Spleen (tissue), 13 donors: ENCODE measurements at regions of chr12 and their contacts with region 1.

Region 1: GRCh38 chr12:118979763-118980406 is 1.5 kb upstream of the SRRM4 start:
- DNase-seq: no peak
- H3K4me3 ChIP-seq: no peak overlapping the region
- H3K27ac ChIP-seq: no peak overlapping the region
- H3K4me1 ChIP-seq: peaks cover 0 to 13% (median 1%) of the 10 kb centered on the region in 6 donors
- H3K27me3 ChIP-seq: peaks cover 3 to 77% (median 26%) of the 10 kb centered on the region in 7 donors
- CTCF ChIP-seq: peak in 9 of 11 experiments; percentile 32 to 67 (median 51)
- POLR2A ChIP-seq: no peak

Region 2: DNA sequence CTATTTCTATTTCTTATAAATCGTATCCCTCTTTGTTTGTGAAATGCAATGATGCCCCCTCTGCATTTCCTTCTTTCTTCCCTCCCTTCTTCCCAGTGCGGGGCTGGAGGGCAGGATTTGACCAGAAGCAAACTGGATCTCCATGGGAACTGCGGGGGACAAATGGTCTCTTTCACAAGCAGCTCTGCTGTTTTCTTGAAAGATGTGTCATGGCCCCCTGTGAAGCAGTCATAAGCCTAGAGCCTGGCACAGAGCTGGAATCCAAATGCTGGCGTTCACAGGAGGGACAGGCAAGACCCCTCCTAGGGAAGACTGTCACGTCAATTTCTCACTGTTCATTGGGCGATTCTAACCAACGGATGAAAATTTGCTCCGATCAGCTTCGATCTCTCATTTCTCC is 1415.0 kb before region 1 on chr12:
- intact Hi-C with region 1: no loop called
- DNase-seq: no peak
- H3K4me3 ChIP-seq: no peak overlapping the region
- H3K27ac ChIP-seq: no peak overlapping the region
- H3K4me1 ChIP-seq: no peaks in the 10 kb centered on the region
- H3K27me3 ChIP-seq: peaks cover 0 to 27% (median 0%) of the 10 kb centered on the region in 7 donors
- CTCF ChIP-seq: no peak
- POLR2A ChIP-seq: no peak

Region 3: DNA sequence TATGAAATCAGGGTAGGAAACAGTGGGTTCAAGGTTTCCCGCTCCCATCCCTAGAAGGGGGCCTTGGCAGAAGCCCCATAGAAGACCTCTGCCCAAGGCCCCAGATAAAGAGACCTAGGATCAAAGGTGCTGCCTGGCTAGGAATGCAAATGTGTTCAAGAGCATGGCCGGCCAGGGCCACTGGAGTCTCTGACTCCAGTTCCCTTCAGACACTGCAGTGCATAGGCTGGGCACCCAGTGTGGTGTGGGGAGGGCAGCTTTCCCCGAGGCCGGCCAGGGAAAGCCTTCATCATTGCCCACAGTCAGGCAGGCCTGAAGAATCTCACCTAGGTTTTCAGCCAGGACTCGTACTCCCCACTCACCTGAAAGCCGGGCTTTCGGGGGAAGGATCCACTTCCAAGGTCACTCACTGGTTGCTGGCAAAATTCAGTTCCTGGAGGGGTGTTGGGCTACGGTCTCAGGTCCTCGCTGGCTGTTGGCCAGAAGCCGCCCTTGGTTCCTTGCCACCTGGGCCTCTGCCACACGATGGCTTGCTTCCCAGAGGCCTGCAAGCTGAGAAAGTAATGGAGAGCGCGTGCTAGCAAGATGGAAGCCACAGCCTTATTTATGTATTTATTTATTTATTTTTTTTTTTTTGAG is 853.6 kb before region 1 on chr12:
- intact Hi-C with region 1: no loop called
- DNase-seq: peak; percentile 59
- H3K4me3 ChIP-seq: no peak overlapping the region
- H3K27ac ChIP-seq: peak overlapping the region in 4 of 8 donors; percentile 23 to 49 (median 35)
- H3K4me1 ChIP-seq: peaks cover 0 to 2% (median under 1%) of the 10 kb centered on the region in 6 donors
- H3K27me3 ChIP-seq: no peaks in the 10 kb centered on the region
- CTCF ChIP-seq: no peak
- POLR2A ChIP-seq: no peak

Region 4: DNA sequence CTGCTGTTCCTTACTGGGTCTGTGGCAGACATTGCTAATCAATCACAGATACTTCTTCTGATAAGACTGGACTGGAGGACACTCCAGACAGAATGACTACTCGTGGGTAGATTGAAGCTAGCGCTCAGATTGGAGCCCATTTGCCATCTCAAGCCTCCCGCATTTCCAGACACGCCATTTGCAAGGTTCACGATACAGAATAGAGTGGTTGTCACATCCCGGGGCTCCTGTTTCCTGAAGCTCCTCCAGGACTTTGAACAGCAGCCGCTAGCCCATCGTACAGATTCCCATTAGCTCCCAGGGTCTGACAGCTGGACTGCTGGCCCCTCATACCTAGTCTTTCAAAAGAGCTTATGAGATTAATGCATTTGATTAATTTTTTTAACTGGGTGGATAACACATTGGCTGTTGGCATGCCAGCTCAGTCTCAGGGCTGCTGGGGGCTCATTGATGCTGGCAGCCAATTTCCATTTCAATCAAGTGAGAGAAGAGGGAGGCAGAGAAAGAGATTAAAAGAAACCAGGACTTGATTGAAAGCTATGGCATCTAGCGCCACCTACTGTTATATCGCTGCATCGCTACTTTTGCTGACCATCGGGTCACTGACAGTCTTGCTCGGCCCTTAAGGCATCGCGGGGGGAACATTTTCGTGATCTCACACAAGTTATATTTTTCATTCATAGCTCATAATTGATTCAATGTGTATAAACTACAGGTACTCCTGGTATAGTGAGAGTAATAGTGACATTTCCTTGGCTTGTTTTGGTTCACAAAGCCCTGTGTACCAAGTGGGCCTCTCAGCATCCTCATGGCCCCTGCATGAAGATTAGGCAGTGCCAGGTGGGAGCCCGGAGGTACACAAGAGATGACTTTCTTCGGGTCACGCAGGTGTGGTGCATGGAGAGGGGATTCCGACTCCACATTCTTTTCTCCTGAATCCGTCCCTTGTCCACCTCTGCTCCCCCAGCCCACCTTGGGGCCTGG is 433.2 kb after region 1 on chr12:
- intact Hi-C with region 1: loop called (anchors 5 kb)
- DNase-seq: no peak
- H3K4me3 ChIP-seq: peak overlapping the region in 2 of 8 donors; percentile 26 to 49
- H3K27ac ChIP-seq: no peak overlapping the region
- H3K4me1 ChIP-seq: peaks cover 0 to 15% (median 3%) of the 10 kb centered on the region in 6 donors
- H3K27me3 ChIP-seq: peaks cover 0 to 40% (median 0%) of the 10 kb centered on the region in 7 donors
- CTCF ChIP-seq: peak; percentile 52 to 82 (median 74)
- POLR2A ChIP-seq: no peak

Region 5: DNA sequence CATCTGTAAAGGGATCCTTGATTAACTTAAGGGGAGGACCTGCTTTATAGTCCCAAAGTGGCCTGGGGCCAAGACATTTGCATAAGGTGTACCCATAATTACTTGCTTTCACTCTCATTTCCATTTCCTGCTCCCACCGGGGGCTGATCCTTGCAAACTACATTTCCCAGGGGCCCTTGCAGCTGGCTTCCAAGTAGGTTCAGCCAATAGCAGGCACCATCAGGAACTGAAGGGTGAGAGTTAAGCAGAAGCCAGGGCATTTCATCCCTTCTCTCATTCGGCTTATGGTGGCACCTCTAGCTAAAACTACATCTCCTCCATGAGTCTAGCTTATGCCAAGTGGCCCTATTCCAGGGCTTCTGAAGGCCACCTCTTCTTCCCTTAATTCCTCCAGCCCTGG is 443.4 kb after region 1 on chr12:
- intact Hi-C with region 1: no loop called
- DNase-seq: no peak
- H3K4me3 ChIP-seq: no peak overlapping the region
- H3K27ac ChIP-seq: no peak overlapping the region
- H3K4me1 ChIP-seq: no peaks in the 10 kb centered on the region
- H3K27me3 ChIP-seq: peaks cover 0 to 15% (median 0%) of the 10 kb centered on the region in 7 donors
- CTCF ChIP-seq: no peak
- POLR2A ChIP-seq: no peak

Region 6: GRCh38 chr12:119544765-119545625 is 565.1 kb after region 1 on chr12:
- intact Hi-C with region 1: loop called (anchors 10 kb)
- DNase-seq: no peak
- H3K4me3 ChIP-seq: no peak overlapping the region
- H3K27ac ChIP-seq: no peak overlapping the region
- H3K4me1 ChIP-seq: no peaks in the 10 kb centered on the region
- H3K27me3 ChIP-seq: peaks cover 0 to 41% (median 0%) of the 10 kb centered on the region in 7 donors
- CTCF ChIP-seq: peak; percentile 63 to 90 (median 81)
- POLR2A ChIP-seq: no peak